HepG2 (cell line): ENCODE measurements at regions of chr5 and their contacts with region 1.

Region 1: GRCh38 chr5:151164686-151165392 is 7.3 kb upstream of the ANXA6 start:
- DNase-seq: peak; percentile 69
- ATAC-seq: peak; percentile 91
- H3K4me3 ChIP-seq: no peak overlapping the region
- H3K27ac ChIP-seq: no peak overlapping the region
- H3K4me1 ChIP-seq: peaks cover 31% of the 10 kb centered on the region
- H3K27me3 ChIP-seq: no peaks in the 10 kb centered on the region; a peak in 1 of 5 replicates
- CTCF ChIP-seq: peak; percentile 93
- EP300 ChIP-seq: no peak
- POLR2A ChIP-seq: no peak
- RAD21 ChIP-seq: peak; percentile 87

Region 2: DNA sequence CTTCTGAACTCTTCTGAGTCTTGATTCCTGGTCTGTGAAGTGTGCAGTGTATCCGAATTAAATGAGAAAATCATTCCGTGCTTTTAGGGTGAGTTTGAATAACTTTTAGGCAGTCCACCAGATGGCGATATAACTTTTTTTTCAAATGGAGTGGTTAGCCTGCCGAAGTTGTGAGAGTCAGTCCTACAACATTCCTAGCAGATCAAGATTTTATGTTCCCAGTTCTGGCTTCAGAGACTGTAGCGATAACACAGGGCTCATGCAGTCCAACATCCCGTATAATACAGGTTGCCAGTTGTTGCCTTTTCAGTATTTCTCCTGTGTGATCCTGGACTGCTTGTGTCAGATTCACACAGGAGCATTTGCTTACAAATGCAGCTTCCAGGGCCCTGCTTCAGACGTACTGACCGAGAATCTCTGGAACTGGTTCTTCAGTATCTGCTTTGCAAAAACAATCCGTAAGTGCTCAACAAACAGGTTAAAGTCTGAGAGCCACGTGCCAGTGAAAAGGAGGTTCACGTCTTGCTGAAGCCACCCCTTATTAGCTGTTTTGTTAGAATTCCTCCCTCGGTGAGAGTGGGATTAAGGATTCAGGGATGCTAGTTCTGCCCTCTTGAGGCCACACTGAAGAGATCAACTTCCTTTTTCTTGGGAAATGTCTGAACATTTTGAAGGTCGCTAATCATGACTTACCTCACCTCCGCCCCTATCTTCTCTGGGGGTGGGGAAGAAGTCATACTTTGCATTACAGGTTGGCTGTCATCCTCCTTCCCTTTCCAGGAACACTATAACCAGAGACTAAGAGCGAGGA is 363.5 kb before region 1 on chr5:
- CTCF ChIA-PET with region 1: no interaction called
- POLR2A ChIA-PET with region 1: no interaction called
- in situ Hi-C with region 1: no loop called
- intact Hi-C with region 1: loop called (anchors 2 kb)
- DNase-seq: peak; percentile 62
- ATAC-seq: peak; percentile 95
- H3K4me3 ChIP-seq: peak overlapping the region; percentile 48 to 66 (median 65); a peak in 5 of 6 replicates
- H3K27ac ChIP-seq: no peak overlapping the region
- H3K4me1 ChIP-seq: peaks cover 14% of the 10 kb centered on the region
- H3K27me3 ChIP-seq: no peaks in the 10 kb centered on the region; a peak in 1 of 5 replicates
- CTCF ChIP-seq: peak; percentile 68
- EP300 ChIP-seq: no peak; a peak in 1 of 4 replicates
- POLR2A ChIP-seq: no peak
- RAD21 ChIP-seq: 0 out of 2 replicates have a peak, but pooled peaks have one; percentile 11

Region 3: DNA sequence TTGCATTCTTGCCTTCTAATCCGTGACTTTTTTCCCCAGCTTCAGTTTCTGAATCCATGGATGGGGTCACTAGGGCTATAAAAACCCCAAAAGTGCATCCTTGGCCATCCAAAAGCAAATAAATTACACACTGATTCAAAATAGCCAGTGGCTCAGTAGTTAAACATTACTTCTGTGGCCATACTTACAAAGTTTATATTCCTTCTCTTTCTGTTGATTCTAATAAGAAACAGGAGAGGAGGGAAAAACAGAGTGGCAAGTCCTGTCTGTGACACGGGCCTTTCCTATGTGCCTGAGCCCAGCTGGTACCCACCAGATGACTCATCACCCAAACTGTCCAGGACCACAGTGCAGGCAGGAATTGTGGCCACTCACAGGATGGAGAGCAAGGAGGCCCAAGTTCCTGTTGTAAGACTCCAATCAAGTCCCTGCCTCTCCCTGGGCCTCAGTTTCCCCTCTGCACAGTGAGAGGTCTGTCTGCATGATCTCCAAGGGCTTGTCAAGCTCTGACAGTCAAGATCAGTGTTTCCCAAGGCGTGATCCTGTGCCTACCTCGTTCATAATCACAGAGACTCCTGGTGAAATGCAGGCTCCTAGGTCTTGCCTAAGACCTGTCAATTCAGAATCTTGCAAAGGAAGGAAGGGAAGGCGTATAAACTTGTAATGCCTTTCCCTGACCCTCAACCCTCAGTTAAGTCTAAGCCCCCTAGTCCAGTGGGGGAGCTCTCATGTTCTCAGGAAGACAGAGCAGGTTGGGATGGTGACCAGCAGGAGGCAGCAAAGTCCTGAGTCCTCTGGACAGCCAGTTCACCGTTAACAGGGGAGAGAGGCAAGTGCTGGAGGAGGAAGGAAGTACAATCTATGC is 113.5 kb before region 1 on chr5:
- CTCF ChIA-PET with region 1: interaction called, 3 read pairs
- POLR2A ChIA-PET with region 1: no interaction called
- in situ Hi-C with region 1: no loop called
- intact Hi-C with region 1: loop called (anchors 1 kb)
- DNase-seq: peak; percentile 68
- ATAC-seq: peak; percentile 91
- H3K4me3 ChIP-seq: no peak overlapping the region
- H3K27ac ChIP-seq: no peak overlapping the region
- H3K4me1 ChIP-seq: no peaks in the 10 kb centered on the region
- H3K27me3 ChIP-seq: no peaks in the 10 kb centered on the region
- CTCF ChIP-seq: peak; percentile 88
- EP300 ChIP-seq: no peak
- POLR2A ChIP-seq: no peak
- RAD21 ChIP-seq: peak; percentile 83

Region 4: DNA sequence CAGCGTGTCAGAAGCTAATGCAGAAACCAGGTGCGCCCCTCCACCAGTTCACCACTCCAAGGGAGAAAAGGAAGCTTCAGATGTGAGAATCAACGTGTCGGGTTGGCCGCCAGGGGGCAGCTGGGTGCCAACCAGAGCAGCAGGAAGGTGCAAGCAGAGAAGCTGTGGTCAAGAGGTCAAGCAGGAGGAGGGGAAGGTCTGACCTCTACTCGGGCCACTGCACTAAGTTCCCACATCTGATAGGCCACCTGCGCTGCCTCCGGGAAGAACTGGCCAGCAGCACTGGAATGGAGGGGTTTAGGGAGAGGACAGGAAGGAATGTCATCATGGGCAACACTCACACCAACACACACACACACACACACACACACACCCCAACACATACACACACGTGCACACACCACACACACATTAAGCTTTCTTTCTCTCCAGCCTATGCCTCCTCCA is 38.6 kb before region 1 on chr5:
- CTCF ChIA-PET with region 1: interaction called, 60 read pairs
- POLR2A ChIA-PET with region 1: interaction called, 15 read pairs
- in situ Hi-C with region 1: loop called (anchors 5 kb)
- intact Hi-C with region 1: loop called (anchors 1 kb)
- DNase-seq: peak; percentile 68
- ATAC-seq: peak; percentile 83
- H3K4me3 ChIP-seq: no peak overlapping the region
- H3K27ac ChIP-seq: no peak overlapping the region
- H3K4me1 ChIP-seq: 0 out of 2 replicates have a peak, but pooled peaks cover 4% of the 10 kb centered on the region
- H3K27me3 ChIP-seq: no peaks in the 10 kb centered on the region
- CTCF ChIP-seq: peak; percentile 93
- EP300 ChIP-seq: no peak
- POLR2A ChIP-seq: no peak
- RAD21 ChIP-seq: peak; percentile 87